ENCODE measurements at regions of chr15 and their contacts with region 1.

Region 1: DNA sequence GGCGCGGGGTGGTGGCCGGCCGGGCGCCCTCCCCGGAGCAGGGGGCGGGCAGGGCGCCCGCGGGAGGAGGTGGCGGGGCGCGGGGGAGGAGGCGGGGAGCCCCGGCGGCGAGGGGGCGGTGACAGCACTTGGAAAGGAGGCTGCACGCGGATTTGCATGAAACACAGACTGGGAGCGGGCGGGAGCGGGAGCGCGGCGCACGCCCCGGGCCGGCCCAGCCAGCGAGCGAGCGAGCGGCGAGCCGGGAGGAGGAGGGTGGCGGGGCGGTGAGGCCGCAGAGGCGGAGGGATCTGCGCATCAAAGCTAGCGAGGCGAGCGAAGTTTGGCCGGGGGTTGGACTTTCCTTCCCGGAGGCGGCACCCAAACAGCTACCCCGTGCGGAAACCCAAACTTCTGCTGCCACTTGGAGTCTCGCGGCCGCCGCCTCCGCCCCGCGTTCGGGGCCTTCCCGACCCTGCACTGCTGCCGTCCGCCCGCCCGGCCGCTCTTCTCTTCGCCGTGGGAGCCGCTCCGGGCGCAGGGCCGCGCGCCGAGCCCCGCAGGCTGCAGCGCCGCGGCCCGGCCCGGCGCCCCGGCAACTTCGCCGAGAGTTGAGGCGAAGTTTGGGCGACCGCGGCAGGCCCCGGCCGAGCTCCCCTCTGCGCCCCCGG is at the start of gene SMAD3:
- DNase-seq: peak; percentile 93 to 95 (median 93)
- ATAC-seq: peak; percentile 80 to 92 (median 88)
- H3K4me3 ChIP-seq: peak within 1 kb of the TSS; percentile 78 to 95 (median 88)
- H3K27ac ChIP-seq: peak within 1 kb of the TSS; percentile 77 to 96 (median 92)
- H3K4me1 ChIP-seq: peaks cover 5 to 49% (median 32%) of the 10 kb centered on the region in 12 donors
- H3K27me3 ChIP-seq: no peaks in the 10 kb centered on the region
- CTCF ChIP-seq: peak in 3 of 12 donors; percentile 4 to 24 (median 5)
- POLR2A ChIP-seq: peak; percentile 10 to 79
- total RNA-seq, gene SMAD3: 12.1 to 34.3 (median 16.3) TPM

Region 2: GRCh38 chr15:66803182-66803729 is 262.3 kb before region 1 on chr15:
- intact Hi-C with region 1: no loop called
- DNase-seq: peak; percentile 80 to 94 (median 91)
- ATAC-seq: peak; percentile 89 to 100 (median 98)
- H3K4me3 ChIP-seq: no peak overlapping the region
- H3K27ac ChIP-seq: peak overlapping the region; percentile 50 to 87 (median 78)
- H3K4me1 ChIP-seq: peaks cover 6 to 39% (median 24%) of the 10 kb centered on the region in 12 donors
- H3K27me3 ChIP-seq: no peaks in the 10 kb centered on the region
- CTCF ChIP-seq: no peak
- POLR2A ChIP-seq: peak in 1 of 2 donors; percentile 11

Region 3: GRCh38 chr15:66815322-66815721 is 250.2 kb before region 1 on chr15:
- intact Hi-C with region 1: no loop called
- DNase-seq: no peak
- ATAC-seq: no peak
- H3K4me3 ChIP-seq: no peak overlapping the region
- H3K27ac ChIP-seq: peak overlapping the region in 1 of 12 donors; percentile 16
- H3K4me1 ChIP-seq: peaks cover 0 to 2% (median 0%) of the 10 kb centered on the region in 12 donors
- H3K27me3 ChIP-seq: no peaks in the 10 kb centered on the region
- CTCF ChIP-seq: no peak
- POLR2A ChIP-seq: no peak

Region 4: GRCh38 chr15:66946578-66947164 is 118.9 kb before region 1 on chr15:
- intact Hi-C with region 1: loop called in 4 of 10 experiments (anchors 5 to 10 kb)
- DNase-seq: peak; percentile 60 to 79 (median 63)
- ATAC-seq: peak; percentile 53 to 83 (median 74)
- H3K4me3 ChIP-seq: peak overlapping the region in 2 of 12 donors; percentile 13 to 28
- H3K27ac ChIP-seq: no peak overlapping the region
- H3K4me1 ChIP-seq: peaks cover 0 to 12% (median 0%) of the 10 kb centered on the region in 12 donors
- H3K27me3 ChIP-seq: no peaks in the 10 kb centered on the region
- CTCF ChIP-seq: peak; percentile 87 to 97 (median 94)
- POLR2A ChIP-seq: no peak

Region 5: DNA sequence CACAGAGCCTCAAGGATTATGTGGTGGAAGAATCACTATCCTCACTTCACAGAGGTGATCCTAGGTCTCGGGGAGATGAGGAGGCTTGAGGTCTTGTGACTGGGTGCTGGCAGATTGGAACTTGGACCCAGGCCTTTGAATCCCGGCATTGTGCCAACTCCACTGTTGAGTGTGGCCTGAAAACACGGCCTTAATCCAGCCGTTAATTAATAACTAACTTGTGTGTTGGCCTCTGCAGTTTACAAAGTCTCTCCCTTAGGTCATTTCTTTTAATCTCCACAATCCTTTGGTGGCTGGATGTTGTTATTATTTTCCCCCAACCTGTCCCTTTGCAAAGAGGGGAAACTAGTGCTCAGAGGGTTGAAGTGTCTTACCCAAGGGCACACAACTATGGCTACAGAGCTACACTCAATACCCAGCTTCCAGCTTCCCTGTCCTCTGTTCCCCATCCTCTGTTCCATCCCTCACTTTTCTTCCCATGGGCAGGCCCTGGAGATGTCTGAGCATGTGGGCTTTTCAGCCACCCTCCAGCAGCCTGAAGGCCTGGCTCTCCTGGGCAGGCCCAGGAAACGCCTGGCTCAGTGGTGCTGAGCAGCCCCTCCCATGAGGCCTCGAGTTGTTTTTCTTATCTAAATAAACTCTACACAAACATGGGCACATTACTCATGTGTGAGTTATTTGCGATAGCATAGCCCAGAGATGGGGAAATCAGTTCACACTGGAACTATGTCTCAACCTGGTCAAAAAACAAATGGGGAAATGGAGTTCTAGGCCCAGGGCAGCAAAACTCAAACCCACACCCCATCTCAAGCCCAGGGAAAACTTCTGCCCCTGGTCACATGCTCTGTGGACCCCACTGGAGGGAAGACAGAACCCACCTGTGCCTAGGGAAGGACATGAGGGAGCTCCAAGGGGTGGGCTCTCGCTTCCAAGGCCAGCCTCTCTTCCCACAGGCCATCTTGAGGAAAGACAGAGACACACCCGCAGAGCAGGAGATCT is 17.0 kb before region 1 on chr15:
- intact Hi-C with region 1: no loop called
- DNase-seq: peak in 2 of 5 donors; percentile 30 to 40
- ATAC-seq: peak; percentile 31 to 56 (median 48)
- H3K4me3 ChIP-seq: no peak overlapping the region
- H3K27ac ChIP-seq: peak overlapping the region in 4 of 12 donors; percentile 10 to 38 (median 24)
- H3K4me1 ChIP-seq: peaks cover 0 to 48% (median 25%) of the 10 kb centered on the region in 12 donors
- H3K27me3 ChIP-seq: no peaks in the 10 kb centered on the region
- CTCF ChIP-seq: no peak
- POLR2A ChIP-seq: no peak

Region 6: GRCh38 chr15:67109141-67110034 is 43.8 kb after region 1 on chr15:
- intact Hi-C with region 1: loop called in 2 of 10 experiments (anchors 5 kb)
- DNase-seq: peak; percentile 55 to 84 (median 78)
- ATAC-seq: peak in 3 of 4 donors; percentile 48 to 51 (median 51)
- H3K4me3 ChIP-seq: no peak overlapping the region
- H3K27ac ChIP-seq: peak overlapping the region in 10 of 12 donors; percentile 14 to 73 (median 43)
- H3K4me1 ChIP-seq: peaks cover 13 to 82% (median 56%) of the 10 kb centered on the region in 12 donors
- H3K27me3 ChIP-seq: no peaks in the 10 kb centered on the region
- CTCF ChIP-seq: no peak
- POLR2A ChIP-seq: no peak

Region 7: DNA sequence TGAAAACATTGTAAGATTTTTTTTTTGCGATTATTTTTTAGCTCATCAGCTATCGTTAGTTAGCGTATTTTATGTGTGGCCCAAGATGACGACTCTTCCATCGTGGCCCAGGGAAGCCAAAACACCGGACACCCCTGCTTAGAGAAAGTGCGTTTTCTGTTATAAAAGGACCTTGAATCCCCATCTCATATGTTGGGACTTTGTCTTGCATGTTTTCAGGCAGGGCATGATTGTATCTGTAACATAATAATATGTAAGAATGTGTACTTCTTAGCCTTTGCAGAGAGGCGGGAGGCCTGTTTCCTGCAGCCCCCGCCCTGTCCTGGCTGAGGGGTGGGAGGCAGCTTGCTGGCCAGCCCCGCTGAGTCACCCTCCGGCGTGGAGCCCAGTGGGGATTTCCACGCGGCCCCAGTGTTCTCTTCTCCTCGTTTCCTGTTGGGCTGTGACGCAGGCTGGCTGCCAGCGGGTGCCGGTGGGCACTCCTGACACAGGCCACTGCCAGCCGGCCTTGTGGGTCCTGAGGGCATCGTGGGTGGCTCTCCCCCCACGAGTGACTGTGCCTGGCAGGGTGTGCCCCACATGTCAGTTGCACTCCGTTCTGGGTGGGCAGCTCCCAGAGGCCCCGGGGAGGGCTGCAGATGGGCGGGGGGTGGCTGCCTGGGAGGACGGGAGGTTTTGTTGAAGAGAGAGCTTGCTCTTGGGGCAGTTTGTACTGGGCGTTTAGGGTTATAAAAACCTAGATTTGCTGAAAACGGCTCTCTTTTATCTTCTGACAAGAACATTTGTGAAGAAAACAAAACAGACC is 55.5 kb after region 1 on chr15:
- intact Hi-C with region 1: loop called in 2 of 10 experiments (anchors 2 to 5 kb)
- DNase-seq: peak; percentile 90 to 94 (median 91)
- ATAC-seq: peak; percentile 80 to 93 (median 88)
- H3K4me3 ChIP-seq: peak overlapping the region in 9 of 12 donors; percentile 5 to 36 (median 19)
- H3K27ac ChIP-seq: peak overlapping the region; percentile 80 to 93 (median 88)
- H3K4me1 ChIP-seq: peaks cover 18 to 98% (median 69%) of the 10 kb centered on the region in 12 donors
- H3K27me3 ChIP-seq: no peaks in the 10 kb centered on the region
- CTCF ChIP-seq: no peak
- POLR2A ChIP-seq: no peak

Region 8: GRCh38 chr15:67157531-67158252 is 92.1 kb after region 1 on chr15:
- intact Hi-C with region 1: loop called in 1 of 10 experiments (anchors 5 kb)
- DNase-seq: no peak
- ATAC-seq: peak; percentile 25 to 85 (median 52)
- H3K4me3 ChIP-seq: no peak overlapping the region
- H3K27ac ChIP-seq: peak overlapping the region in 11 of 12 donors; percentile 2 to 66 (median 43)
- H3K4me1 ChIP-seq: peaks cover 4 to 52% (median 29%) of the 10 kb centered on the region in 12 donors
- H3K27me3 ChIP-seq: no peaks in the 10 kb centered on the region
- CTCF ChIP-seq: no peak
- POLR2A ChIP-seq: no peak

Region 9: GRCh38 chr15:67188551-67189218 is 123.1 kb after region 1 on chr15:
- intact Hi-C with region 1: loop called in 4 of 10 experiments (anchors 5 kb)
- DNase-seq: peak in 2 of 5 donors; percentile 60 to 63
- ATAC-seq: no peak
- H3K4me3 ChIP-seq: no peak overlapping the region
- H3K27ac ChIP-seq: peak overlapping the region; percentile 66 to 98 (median 92)
- H3K4me1 ChIP-seq: peaks cover 12 to 70% (median 54%) of the 10 kb centered on the region in 12 donors
- H3K27me3 ChIP-seq: no peaks in the 10 kb centered on the region
- CTCF ChIP-seq: no peak
- POLR2A ChIP-seq: no peak

Region 10: GRCh38 chr15:67303490-67304363 is 238.2 kb after region 1 on chr15:
- intact Hi-C with region 1: loop called in 1 of 10 experiments (anchors 10 kb)
- DNase-seq: no peak
- ATAC-seq: peak in 1 of 4 donors; percentile 65
- H3K4me3 ChIP-seq: no peak overlapping the region
- H3K27ac ChIP-seq: no peak overlapping the region
- H3K4me1 ChIP-seq: no peaks in the 10 kb centered on the region
- H3K27me3 ChIP-seq: no peaks in the 10 kb centered on the region
- CTCF ChIP-seq: peak in 11 of 12 donors; percentile 37 to 68 (median 53)
- POLR2A ChIP-seq: no peak

Region 11: DNA sequence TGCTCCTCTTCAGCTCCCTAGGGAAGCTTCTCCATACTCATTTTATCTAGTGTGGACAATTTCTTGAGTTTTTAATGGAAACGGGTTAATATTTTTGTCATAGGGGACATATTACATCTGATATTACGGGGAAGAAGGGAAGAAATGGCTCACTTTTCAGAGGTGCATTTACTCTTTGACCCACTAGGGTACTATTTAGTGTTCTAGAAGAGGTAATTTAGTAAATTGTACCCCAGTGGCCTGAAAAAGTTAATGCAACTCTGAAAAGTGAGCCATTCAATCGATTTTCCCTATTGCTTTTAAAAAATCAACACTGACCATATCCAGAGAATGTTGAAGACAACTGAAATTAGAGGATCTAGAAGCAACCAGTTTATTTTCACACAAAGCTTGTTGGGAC is 548.1 kb after region 1 on chr15:
- intact Hi-C with region 1: no loop called
- DNase-seq: no peak
- ATAC-seq: no peak
- H3K4me3 ChIP-seq: no peak overlapping the region
- H3K27ac ChIP-seq: no peak overlapping the region
- H3K4me1 ChIP-seq: no peaks in the 10 kb centered on the region
- H3K27me3 ChIP-seq: no peaks in the 10 kb centered on the region
- CTCF ChIP-seq: peak in 3 of 12 donors; percentile 5 to 26 (median 14)
- POLR2A ChIP-seq: no peak